ENCODE measurements at regions of chr13 and their contacts with region 1.

Region 1: GRCh38 chr13:19618925-19619324 is 14.5 kb upstream of the MPHOSPH8 start:
- DNase-seq: peak; percentile 40
- ATAC-seq: peak; percentile 67
- H3K4me3 Mint-ChIP-seq: no peak overlapping the region
- H3K27ac Mint-ChIP-seq: no peak overlapping the region
- H3K4me1 Mint-ChIP-seq: peaks cover 3% of the 10 kb centered on the region
- H3K27me3 Mint-ChIP-seq: peaks cover 20% of the 10 kb centered on the region
- CTCF ChIP-seq: peak; percentile 45

Region 2: GRCh38 chr13:19633479-19634255 is 14.7 kb after region 1 on chr13 and contains the start of gene MPHOSPH8:
- CTCF ChIA-PET with region 1: interaction called, 11 read pairs
- POLR2A ChIA-PET with region 1: no interaction called
- intact Hi-C with region 1: no loop called
- DNase-seq: peak; percentile 95
- ATAC-seq: peak; percentile 98
- H3K4me3 Mint-ChIP-seq: peak within 1 kb of the TSS; percentile 100
- H3K27ac Mint-ChIP-seq: peak within 1 kb of the TSS; percentile 100
- H3K4me1 Mint-ChIP-seq: peaks cover 26% of the 10 kb centered on the region
- H3K27me3 Mint-ChIP-seq: no peaks in the 10 kb centered on the region
- CTCF ChIP-seq: no peak
- total RNA-seq, gene MPHOSPH8: 26.9 to 27.4 TPM